Endothelial cell of umbilical vein (primary cell): ENCODE measurements at regions of chr5 and their contacts with region 1.

Region 1: DNA sequence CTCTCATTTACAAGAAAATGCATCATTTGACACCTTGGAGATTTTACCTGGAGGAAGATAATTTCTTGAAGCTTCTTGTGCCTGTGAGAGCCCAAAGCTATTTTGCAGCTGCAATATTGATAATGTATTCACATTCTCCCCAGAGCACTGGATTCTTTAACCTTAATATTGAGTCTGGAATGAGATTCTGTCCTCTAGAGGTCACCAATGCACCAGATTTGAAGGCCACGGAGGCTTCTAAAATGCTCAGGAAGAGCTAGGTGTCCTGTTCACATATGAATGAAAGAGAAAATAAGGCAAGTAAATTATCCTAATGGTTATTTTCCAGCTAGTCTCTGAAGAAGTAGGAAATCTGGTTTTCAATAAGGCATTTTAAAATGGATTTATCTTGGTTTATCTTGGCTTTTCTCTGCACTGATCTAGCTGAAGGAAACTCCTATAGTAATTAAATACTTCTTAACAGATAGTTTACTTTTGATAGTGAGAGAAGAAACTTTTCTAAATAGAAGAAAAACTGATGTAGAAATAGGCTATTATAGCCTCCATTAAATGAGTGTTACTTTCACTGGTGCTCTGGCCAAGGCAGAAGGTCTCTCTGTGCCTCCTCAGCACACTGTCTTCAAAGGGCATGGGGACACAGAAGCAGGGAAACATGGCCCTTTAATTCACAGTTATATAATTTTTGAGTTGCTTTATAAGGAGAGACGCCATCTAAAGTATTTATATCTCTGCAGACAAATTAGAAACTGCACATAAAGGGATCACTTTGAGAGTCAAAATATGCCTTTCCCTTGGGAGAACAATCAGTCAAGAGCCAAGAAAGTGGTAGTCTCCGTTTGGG is 297.0 kb upstream of the ACTBL2 start:
- DNase-seq: peak; percentile 90
- H3K4me3 ChIP-seq: peak overlapping the region in 1 of 3 experiments; percentile 3
- H3K27ac ChIP-seq: peak overlapping the region; percentile 71
- H3K4me1 ChIP-seq: peaks cover 37% of the 10 kb centered on the region
- H3K27me3 ChIP-seq: no peaks in the 10 kb centered on the region
- CTCF ChIP-seq: peak; percentile 30 to 53
- POLR2A ChIP-seq: no peak

Region 2: DNA sequence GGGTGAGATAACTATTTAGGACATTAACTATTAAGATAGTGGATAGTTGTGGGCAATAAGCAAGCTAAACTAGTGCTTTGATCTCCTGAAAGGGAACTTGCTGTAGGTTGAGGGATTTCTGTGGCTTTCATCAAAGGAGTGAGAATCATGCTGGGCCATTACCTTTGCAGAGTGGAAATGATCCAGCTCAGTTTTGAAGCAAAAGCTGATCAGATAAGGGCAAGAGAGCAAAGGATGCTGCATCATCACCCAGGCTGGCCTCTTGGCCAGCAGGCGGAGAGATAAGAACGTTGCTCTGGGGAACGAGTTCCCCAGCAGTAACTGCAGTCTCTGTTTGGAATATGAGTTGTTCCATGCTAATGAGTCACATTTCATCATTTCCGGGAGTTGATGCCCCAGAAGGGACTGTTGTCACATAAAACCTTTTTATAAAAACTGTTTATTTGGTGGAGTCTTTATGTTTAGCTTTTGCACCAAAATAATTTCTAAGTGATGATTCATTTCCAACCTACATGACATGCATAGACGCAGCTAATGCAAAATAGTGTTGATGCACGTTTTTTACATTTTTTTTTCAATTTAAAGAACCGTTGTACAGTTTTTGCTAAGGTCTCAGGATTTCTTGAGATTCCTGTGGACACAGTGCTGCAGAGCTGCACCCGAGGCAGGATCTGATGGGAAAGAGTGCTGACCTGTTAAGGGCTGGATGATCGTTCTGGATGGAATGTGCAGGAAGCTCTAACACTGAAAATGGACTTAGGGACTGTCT is 396.3 kb before region 1 on chr5:
- CTCF ChIA-PET with region 1: interaction called, 4 read pairs
- POLR2A ChIA-PET with region 1: interaction called, 4 read pairs
- dilution Hi-C with region 1: no loop called
- intact Hi-C with region 1: loop called (anchors 1 kb)
- DNase-seq: peak; percentile 96
- H3K4me3 ChIP-seq: peak overlapping the region in 1 of 3 experiments; percentile 40
- H3K27ac ChIP-seq: peak overlapping the region; percentile 94
- H3K4me1 ChIP-seq: peaks cover 19% of the 10 kb centered on the region
- H3K27me3 ChIP-seq: no peaks in the 10 kb centered on the region
- CTCF ChIP-seq: peak in 1 of 2 donors; percentile 33
- POLR2A ChIP-seq: peak; percentile 60

Region 3: DNA sequence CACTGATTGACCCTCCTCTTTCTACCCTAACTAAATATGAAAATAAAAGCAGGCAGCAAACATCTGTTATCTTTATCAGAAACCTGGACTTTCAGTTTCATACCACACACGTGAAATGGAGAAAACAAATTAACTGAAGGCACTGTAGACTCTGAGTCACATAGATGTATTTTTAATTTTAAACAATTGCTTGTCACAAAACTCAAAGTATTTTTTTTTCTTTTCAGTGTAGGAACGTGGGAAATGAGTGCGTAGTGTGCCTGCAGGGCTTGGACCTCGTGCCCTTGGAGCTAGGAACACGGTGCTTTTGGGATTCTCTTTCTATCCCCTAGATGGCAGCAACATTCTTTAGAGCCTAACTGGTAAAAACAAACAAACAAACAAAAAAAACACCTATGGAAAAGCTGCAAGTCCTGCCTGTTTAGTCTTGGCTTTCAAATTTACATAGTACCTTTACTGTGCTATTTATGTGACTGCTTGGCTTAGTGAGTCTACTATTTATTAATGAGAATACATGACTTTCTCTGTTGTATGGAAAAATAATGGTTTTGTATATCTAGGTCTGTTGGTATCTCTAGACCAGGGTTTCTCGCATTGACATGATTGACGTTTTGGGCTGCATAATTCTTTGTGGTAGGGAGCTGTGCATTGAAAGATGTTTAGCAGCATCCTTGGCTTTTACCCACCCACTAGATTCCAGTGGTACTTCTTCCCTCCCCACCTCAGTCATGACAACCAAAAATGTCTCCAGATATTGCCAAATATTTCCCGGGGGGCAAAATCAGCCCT is 280.1 kb before region 1 on chr5:
- CTCF ChIA-PET with region 1: interaction called, 173 read pairs
- POLR2A ChIA-PET with region 1: interaction called, 3 read pairs
- dilution Hi-C with region 1: no loop called
- intact Hi-C with region 1: loop called (anchors 1 kb)
- DNase-seq: peak; percentile 94
- H3K4me3 ChIP-seq: no peak overlapping the region
- H3K27ac ChIP-seq: no peak overlapping the region
- H3K4me1 ChIP-seq: peaks cover 37% of the 10 kb centered on the region
- H3K27me3 ChIP-seq: no peaks in the 10 kb centered on the region
- CTCF ChIP-seq: peak; percentile 62 to 66
- POLR2A ChIP-seq: no peak

Region 4: DNA sequence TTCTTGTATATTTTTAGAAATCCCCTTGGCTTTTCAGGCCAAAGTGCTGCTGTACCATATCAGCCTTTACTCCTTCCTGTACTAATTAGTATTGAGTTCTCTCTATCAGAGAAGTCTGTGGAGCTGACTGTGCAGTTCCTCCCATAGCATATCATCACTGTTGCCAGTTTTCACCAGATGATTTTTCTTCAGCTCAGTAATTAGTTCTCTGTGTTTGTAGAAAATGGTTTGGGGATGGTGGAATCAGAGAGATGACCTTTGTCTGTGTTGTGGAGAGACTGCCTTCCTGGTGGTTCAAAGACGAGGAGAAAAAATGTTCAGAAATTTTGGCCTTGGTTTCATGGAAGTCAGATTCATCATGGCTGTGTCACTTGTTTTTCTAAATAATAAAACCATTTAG is 69.5 kb before region 1 on chr5:
- CTCF ChIA-PET with region 1: no interaction called
- POLR2A ChIA-PET with region 1: no interaction called
- dilution Hi-C with region 1: no loop called
- intact Hi-C with region 1: no loop called
- DNase-seq: no peak
- H3K4me3 ChIP-seq: no peak overlapping the region
- H3K27ac ChIP-seq: no peak overlapping the region
- H3K4me1 ChIP-seq: peaks cover 1% of the 10 kb centered on the region
- H3K27me3 ChIP-seq: no peaks in the 10 kb centered on the region
- CTCF ChIP-seq: no peak
- POLR2A ChIP-seq: no peak

Region 5: DNA sequence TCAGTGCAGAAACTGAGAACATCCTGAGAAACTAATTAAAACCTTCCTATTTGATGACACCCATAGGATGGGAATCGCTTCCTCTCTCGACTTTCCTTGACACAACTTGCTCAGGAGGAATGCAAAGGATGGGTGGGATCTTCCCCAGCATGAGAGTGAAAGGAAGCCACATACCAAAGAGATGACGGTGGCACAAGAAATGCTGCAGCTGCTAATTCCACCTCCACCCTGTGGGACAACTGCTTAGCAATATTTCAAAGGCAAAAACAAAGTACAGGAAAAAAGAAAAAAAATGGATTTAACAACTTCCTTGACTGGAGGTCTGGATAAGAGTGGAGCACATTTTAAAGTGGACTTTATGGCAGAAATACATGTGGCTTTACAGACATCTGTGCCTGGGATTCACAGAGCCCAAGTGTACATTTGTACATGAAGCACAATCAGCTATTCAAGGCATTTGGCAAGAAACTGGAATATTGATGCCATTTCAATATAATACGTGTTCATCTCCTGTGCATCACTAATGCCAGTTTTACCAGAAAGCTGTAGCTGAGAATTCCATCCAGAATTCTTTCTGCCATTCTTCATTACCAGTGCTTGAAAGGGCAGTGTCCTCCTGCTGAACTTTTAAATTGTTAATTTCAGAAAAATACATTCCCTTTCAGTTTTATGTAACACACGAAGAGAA is 62.2 kb after region 1 on chr5:
- CTCF ChIA-PET with region 1: interaction called, 19 read pairs
- POLR2A ChIA-PET with region 1: interaction called, 4 read pairs
- dilution Hi-C with region 1: no loop called
- intact Hi-C with region 1: loop called (anchors 1 kb)
- DNase-seq: peak; percentile 96
- H3K4me3 ChIP-seq: no peak overlapping the region
- H3K27ac ChIP-seq: peak overlapping the region; percentile 90
- H3K4me1 ChIP-seq: peaks cover 66% of the 10 kb centered on the region
- H3K27me3 ChIP-seq: no peaks in the 10 kb centered on the region
- CTCF ChIP-seq: no peak
- POLR2A ChIP-seq: no peak

Region 6: GRCh38 chr5:58240286-58240685 is 460.7 kb after region 1 on chr5:
- CTCF ChIA-PET with region 1: interaction called, 26 read pairs
- POLR2A ChIA-PET with region 1: interaction called, 4 read pairs
- dilution Hi-C with region 1: no loop called
- intact Hi-C with region 1: loop called (anchors 1 kb)
- DNase-seq: peak; percentile 89
- H3K4me3 ChIP-seq: no peak overlapping the region
- H3K27ac ChIP-seq: peak overlapping the region; percentile 89
- H3K4me1 ChIP-seq: peaks cover 54% of the 10 kb centered on the region
- H3K27me3 ChIP-seq: no peaks in the 10 kb centered on the region
- CTCF ChIP-seq: no peak
- POLR2A ChIP-seq: no peak

Region 7: DNA sequence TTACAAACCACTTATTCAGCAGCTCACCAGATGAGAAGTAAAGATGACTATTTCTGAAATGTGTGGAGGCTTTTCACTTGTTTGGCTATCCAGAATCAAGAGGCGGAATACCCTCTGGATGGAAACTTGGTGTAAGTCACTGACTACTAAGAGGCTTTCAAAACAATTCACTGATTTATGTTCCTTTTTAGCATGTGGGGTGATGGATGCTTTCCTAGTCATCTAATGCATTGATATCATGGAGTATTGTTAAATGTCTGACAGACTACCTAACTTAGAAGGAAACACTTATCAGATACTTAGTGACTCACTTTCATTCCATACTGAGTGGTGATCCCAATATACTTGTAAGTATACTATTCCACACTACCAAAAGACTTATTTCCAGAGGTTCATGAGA is 538.9 kb after region 1 on chr5:
- CTCF ChIA-PET with region 1: no interaction called
- POLR2A ChIA-PET with region 1: no interaction called
- dilution Hi-C with region 1: no loop called
- intact Hi-C with region 1: loop called (anchors 5 kb)
- DNase-seq: peak; percentile 85
- H3K4me3 ChIP-seq: no peak overlapping the region
- H3K27ac ChIP-seq: no peak overlapping the region
- H3K4me1 ChIP-seq: peaks cover 31% of the 10 kb centered on the region
- H3K27me3 ChIP-seq: no peaks in the 10 kb centered on the region
- CTCF ChIP-seq: no peak
- POLR2A ChIP-seq: no peak

Region 8: GRCh38 chr5:59773286-59773685 is 1993.7 kb after region 1 on chr5:
- CTCF ChIA-PET with region 1: no interaction called
- POLR2A ChIA-PET with region 1: no interaction called
- dilution Hi-C with region 1: no loop called
- intact Hi-C with region 1: no loop called
- DNase-seq: no peak
- H3K4me3 ChIP-seq: no peak overlapping the region
- H3K27ac ChIP-seq: no peak overlapping the region
- H3K4me1 ChIP-seq: peaks cover 15% of the 10 kb centered on the region
- H3K27me3 ChIP-seq: no peaks in the 10 kb centered on the region
- CTCF ChIP-seq: no peak
- POLR2A ChIP-seq: no peak